GM10248 (cell line): ENCODE measurements at regions of chr15 and their contacts with region 1.

Region 1: DNA sequence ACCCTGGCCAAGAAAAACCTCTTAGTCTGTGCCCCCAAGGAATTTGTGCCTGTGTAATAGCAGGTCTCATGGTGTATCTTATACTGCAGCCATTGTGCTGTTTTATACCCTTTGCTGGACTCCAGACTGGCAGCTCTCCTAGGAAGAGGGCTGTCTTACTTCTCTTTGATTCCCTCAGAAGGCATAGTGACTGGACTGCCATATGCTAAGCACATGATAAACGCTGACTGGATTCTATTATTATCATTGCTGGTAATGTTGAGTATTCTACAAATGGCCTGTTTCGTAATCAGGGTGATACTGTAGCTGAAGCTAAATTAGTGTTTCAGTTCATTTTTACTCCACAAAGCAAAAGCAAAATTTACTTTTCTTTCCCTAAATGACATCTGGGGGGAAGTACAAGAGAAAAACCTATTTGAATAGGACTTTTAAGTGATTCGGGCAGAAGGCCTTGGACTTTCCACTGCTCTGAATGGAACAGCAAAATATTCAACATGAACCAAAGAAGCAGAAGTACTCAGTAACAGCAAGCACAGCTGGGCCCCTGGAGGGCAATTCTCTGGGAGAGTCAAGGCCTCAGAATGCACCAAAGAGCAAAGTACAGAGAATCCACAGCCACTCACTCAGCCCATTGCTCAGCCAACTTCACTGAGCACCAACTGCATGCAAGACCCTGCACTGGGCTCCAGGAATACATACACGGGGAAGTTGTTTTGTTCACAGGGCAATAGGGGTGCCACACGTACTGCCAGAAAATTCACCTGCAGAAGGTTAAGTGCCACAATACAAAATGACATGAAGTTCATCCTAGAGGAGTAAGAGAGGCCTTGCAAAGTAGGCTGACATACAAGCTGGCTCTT is 7.9 kb upstream of the BCL2A1 start:
- DNase-seq: peak; percentile 56
- CTCF ChIP-seq: no peak

Region 2: GRCh38 chr15:79923515-79924395 is 55.1 kb before region 1 on chr15:
- CTCF ChIA-PET with region 1: no interaction called
- POLR2A ChIA-PET with region 1: interaction called, 12 read pairs
- DNase-seq: peak; percentile 99
- CTCF ChIP-seq: no peak

Region 3: DNA sequence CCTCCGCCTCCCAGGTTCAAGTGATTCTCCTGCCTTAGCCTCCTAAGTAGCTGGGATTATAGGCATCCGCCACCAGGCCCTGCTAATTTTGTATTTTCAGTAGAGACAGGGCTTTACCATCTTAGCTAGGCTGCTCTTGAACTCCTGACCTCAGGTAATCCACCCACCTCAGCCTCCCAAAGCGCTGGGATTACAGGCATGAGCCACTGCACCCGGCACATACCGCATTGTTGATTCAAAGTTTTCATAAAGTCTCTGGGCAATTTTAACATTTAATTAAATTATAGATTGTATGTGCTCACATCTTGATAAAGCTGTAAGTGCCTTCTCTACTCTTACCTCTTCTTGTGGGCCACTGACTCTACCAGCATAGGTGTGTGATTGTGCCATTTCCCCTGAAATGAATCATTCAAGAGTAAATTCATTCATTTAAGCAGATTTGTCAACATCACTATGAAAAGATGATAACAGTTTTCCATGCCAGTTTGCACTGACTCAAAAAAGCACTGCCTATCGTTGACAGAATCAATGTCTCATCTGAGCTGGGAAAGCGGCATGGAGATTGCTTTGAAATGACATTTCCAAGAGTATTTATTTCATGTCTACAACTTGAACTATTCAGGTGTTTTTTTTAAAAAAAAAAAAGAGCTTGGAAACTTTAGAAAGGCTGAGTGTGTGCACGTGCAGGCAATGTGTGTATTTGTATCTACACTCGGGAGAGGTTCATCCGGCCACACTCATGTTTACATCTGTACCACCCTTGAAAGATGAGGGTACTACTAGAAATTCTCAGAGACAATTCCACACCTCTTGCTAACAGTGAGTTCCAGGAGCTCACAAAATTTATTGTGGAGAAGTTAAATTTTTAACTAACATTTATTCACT is 11.3 kb before region 1 on chr15:
- CTCF ChIA-PET with region 1: interaction called, 15 read pairs
- POLR2A ChIA-PET with region 1: interaction called, 5 read pairs
- DNase-seq: no peak
- CTCF ChIP-seq: no peak

Region 4: GRCh38 chr15:79989682-79990081 is 10.8 kb after region 1 on chr15:
- CTCF ChIA-PET with region 1: interaction called, 77 read pairs
- POLR2A ChIA-PET with region 1: no interaction called
- DNase-seq: no peak
- CTCF ChIP-seq: no peak

Region 5: DNA sequence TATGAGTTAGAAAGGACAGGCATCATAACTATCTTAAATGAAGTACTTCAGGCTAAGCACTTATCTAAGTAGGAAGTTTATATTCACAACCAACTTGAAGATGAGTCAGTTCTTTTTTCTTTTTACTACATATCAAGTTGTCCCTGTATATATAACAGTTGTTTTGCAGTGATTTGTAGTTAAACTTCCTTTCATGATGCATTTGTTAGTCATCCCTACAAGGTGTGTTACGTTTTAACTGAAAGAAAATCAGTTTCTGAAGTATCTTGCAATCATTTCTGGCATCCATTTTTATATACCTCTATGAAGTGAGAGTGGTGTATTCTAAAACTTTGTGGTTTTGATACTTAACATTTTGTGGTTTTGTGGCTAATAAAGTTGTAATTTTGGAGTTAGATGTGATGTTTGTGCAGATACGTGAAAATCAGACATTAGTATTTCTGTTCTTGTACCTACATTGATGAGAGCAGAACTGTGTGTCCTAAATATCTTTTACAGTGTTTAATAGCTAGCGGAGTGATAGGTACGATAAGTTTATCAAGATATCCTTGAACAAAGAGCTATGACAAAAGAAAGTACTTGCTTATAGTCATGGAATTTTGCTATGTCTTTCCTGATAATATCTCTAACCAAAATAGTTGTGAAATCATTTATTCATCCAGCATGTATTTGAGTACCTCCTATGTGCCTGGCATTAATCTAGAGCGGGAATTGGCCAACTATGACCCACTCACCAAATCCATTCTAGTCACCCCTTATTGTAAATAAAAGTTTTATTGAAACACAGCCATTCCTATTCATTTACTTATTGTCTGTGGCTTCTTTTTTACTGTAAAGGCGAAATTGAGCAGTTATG is 126.9 kb after region 1 on chr15:
- CTCF ChIA-PET with region 1: no interaction called
- POLR2A ChIA-PET with region 1: no interaction called
- DNase-seq: no peak
- CTCF ChIP-seq: no peak

Region 6: GRCh38 chr15:80367094-80367493 is 388.2 kb after region 1 on chr15:
- CTCF ChIA-PET with region 1: no interaction called
- POLR2A ChIA-PET with region 1: no interaction called
- DNase-seq: no peak
- CTCF ChIP-seq: no peak